Gastrocnemius medialis (tissue), 4 donors: ENCODE measurements at regions of chr21 and their contacts with region 1.

Region 1: GRCh38 chr21:31198575-31198974 is 145.5 kb downstream of the TIAM1 start:
- DNase-seq: no peak
- ATAC-seq: peak in 1 of 2 donors; percentile 27
- H3K4me3 ChIP-seq: no peak overlapping the region
- H3K27ac ChIP-seq: no peak overlapping the region
- H3K4me1 ChIP-seq: no peaks in the 10 kb centered on the region
- H3K27me3 ChIP-seq: no peaks in the 10 kb centered on the region
- CTCF ChIP-seq: peak; percentile 17 to 44 (median 36)
- POLR2A ChIP-seq: no peak

Region 2: DNA sequence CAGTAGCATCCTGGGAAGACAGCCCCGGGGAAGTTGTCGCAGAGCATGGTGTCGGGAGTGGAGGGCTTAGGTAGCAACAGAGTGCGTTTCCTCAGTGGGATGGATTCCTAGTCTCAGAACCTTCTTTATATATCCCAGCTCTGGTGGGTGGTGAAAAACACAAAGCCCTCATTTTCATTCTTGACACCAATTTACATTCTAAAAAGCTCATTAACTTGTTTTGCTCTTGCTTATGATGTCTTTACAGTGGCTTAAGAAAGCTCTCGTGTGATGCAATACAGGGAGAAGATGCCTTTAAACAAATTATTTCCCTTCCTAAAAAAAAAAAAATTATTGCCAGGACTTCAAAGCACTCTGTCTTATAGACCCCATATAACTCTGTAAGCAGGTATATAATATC is 385.4 kb before region 1 on chr21 and contains the start of gene KRTAP8-1:
- in situ Hi-C with region 1: no loop called
- intact Hi-C with region 1: no loop called
- DNase-seq: no peak
- ATAC-seq: no peak
- H3K4me3 ChIP-seq: no peak within 1 kb of the TSS
- H3K27ac ChIP-seq: no peak within 1 kb of the TSS
- H3K4me1 ChIP-seq: no peaks in the 10 kb centered on the region
- H3K27me3 ChIP-seq: no peaks in the 10 kb centered on the region
- CTCF ChIP-seq: no peak
- POLR2A ChIP-seq: no peak
- total RNA-seq, gene KRTAP8-1: not detected

Region 3: GRCh38 chr21:31580866-31581276 is 382.3 kb after region 1 on chr21:
- in situ Hi-C with region 1: loop called (anchors 10 to 25 kb)
- intact Hi-C with region 1: loop called (anchors 5 kb)
- DNase-seq: peak in 1 of 2 donors; percentile 30
- ATAC-seq: peak in 1 of 2 donors; percentile 19
- H3K4me3 ChIP-seq: no peak overlapping the region
- H3K27ac ChIP-seq: no peak overlapping the region
- H3K4me1 ChIP-seq: no peaks in the 10 kb centered on the region
- H3K27me3 ChIP-seq: peaks cover 0 to 2% (median 0%) of the 10 kb centered on the region in 3 donors
- CTCF ChIP-seq: peak in 4 of 5 experiments; percentile 27 to 58 (median 46)
- POLR2A ChIP-seq: no peak

Region 4: GRCh38 chr21:31604591-31605190 is 406.1 kb after region 1 on chr21:
- in situ Hi-C with region 1: loop called in 2 of 4 experiments (anchors 10 to 25 kb)
- intact Hi-C with region 1: loop called (anchors 2 kb)
- DNase-seq: peak; percentile 6 to 17
- ATAC-seq: no peak
- H3K4me3 ChIP-seq: no peak overlapping the region
- H3K27ac ChIP-seq: no peak overlapping the region
- H3K4me1 ChIP-seq: no peaks in the 10 kb centered on the region
- H3K27me3 ChIP-seq: no peaks in the 10 kb centered on the region
- CTCF ChIP-seq: peak; percentile 59 to 79 (median 69)
- POLR2A ChIP-seq: no peak